Activated T-helper 1 cell treated with anti-CD3 and anti-CD28 coated beads, Interleukin-12 subunit alpha, Interleukin-12 subunit beta, Interleukin-2, Interleukin-4 antibody, amounts not matched to agents 30 ng/mL and 10 ng/mL and 1 ng/mL, durations not matched to agents 14 hours and 24 hours and 36 hours (primary cell): ENCODE measurements at regions of chr4 and their contacts with region 1.

Region 1: DNA sequence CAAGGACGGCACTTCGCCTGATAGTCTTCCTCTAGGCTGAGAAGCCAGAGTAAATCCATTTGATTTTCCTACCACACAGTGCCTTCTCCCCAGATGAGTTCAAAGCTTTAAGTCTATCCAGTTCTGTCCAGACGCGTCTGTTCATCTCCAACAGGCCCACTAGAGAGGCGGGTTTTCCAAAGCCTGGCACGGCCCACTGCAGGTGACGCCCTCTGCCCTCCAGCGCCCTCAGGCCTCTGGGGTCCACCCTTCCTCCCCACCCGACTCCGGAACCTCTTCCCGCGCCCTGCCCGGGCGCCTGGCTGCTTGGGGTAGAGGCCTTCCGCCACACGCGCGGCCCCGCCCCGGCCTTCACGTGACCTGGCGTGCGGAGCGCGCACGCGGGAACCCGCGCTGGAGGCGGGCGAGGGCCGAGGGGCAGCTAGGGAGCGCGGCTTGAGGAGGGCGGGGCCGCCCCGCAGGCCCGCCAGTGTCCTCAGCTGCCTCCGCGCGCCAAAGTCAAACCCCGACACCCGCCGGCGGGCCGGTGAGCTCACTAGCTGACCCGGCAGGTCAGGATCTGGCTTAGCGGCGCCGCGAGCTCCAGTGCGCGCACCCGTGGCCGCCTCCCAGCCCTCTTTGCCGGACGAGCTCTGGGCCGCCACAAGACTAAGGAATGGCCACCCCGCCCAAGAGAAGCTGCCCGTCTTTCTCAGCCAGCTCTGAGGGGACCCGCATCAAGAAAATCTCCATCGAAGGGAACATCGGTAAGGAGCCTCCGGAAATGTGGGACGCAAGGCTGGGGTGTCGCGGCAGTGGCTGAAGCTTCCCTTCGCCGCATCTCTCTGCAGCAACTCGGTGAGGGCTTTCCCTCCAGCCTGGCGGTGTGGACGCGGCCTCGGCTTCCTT is at the start of gene DCK:
- DNase-seq: peak; percentile 85
- H3K4me3 Mint-ChIP-seq: peak within 1 kb of the TSS; percentile 97
- H3K27ac Mint-ChIP-seq: peak within 1 kb of the TSS; percentile 83
- H3K4me1 Mint-ChIP-seq: peaks cover 53% of the 10 kb centered on the region
- H3K27me3 Mint-ChIP-seq: no peaks in the 10 kb centered on the region
- total RNA-seq, gene DCK: 35.6 and 37.3 TPM in 2 replicates

Region 2: DNA sequence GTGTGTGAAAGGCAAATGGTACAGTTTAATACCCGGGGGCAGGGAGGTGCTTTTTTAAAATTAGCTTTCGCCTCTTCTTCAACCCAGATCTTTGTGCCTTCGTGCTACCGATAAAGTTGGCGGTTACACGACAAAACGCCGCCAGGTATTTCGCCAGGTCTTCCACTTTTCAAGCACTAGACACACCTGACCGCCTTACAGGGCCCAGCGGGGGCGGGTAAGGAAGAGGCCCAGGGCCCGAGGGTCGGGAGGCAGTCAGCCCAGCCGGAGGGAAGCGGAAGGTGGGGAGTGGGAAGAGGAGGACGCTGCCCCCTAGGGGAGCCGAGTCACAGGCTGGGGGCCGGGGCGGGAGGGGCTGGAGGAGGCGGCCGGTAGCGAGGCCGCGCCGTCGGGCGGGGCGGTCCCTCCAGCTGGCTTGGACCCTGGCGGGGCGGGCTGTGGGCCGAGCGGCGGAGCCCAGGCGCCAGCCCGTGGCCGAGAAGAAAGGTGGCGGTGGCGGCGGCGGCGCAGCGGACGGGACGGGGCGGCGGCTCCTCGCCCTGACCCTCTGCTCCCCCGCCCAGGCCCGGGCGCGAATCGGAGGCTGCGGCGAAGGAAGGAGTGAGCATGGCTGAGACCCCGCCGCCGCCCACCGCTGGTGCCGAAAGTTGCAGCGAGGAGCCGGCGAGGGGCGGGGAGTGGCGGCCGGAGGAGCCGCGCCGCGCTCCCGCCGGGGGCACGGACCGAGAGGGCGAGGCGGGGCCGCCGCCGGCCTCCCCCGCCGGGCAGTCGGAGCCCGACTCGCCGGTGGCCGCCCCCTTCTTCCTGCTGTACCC is 288.9 kb before region 1 on chr4:
- intact Hi-C with region 1: loop called (anchors 2 kb)
- DNase-seq: peak; percentile 38
- H3K4me3 Mint-ChIP-seq: peak overlapping the region; percentile 76
- H3K27ac Mint-ChIP-seq: peak overlapping the region; percentile 83
- H3K4me1 Mint-ChIP-seq: peaks cover 24% of the 10 kb centered on the region
- H3K27me3 Mint-ChIP-seq: peaks cover 3% of the 10 kb centered on the region

Region 3: DNA sequence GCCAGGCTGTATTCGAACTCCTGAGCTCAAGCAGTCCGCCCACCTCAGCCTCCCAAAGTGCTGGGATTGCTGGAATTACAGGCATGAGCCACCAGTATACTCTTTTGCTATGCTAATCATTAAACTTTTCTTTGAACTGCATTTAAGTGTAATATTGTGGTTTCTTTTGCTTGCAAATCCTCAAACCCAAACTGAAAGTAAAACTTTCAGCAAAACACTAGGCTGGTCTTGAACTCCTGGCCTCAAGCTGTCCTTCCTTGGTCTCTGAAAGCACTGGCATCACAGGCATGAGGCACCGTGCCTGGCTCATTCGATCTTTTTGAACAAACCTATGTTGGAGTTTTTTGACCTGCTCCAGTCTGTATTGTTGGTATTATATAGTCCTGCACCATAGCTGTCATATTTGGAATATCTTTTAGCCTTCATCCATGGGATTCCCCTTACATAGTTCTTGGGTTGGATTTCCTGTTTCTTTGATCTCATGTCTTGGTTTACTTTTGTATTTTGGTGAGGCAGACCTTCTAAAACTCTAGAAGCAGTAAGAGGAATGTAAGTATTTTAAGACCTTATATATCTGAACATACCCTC is 57.1 kb before region 1 on chr4:
- intact Hi-C with region 1: loop called (anchors 5 kb)
- DNase-seq: peak; percentile 4
- H3K4me3 Mint-ChIP-seq: no peak overlapping the region
- H3K27ac Mint-ChIP-seq: peak overlapping the region; percentile 0
- H3K4me1 Mint-ChIP-seq: peaks cover 29% of the 10 kb centered on the region
- H3K27me3 Mint-ChIP-seq: no peaks in the 10 kb centered on the region

Region 4: DNA sequence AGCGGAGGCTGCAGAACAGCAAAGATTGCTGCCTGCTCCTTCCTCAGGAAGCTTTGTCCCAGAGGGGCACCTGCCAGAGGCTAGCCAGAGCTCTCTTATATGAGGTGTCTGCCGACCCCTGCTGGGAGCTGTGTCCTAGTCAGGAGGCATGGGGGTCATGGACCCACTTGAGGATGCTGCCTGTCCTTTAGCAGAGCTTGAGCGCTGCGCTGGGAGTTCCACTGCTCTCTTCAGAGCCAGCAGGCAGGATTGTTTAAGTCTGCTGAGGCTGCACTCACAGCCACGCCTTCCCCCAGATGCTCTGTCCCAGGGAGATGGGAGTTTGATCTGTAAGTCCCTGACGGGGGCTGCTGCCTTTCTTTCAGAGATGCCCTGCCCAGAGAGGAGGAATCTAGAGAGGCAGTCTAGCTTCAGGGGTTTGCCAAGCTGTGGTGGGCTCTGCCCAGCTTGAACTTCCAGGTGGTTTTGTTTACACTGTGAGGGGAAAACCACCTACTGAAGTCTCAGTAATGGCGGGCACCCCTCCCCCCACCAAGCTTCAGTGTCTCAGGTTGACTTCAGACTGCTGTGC is 10.9 kb after region 1 on chr4:
- intact Hi-C with region 1: loop called (anchors 1 kb)
- DNase-seq: peak; percentile 54
- H3K4me3 Mint-ChIP-seq: peak overlapping the region; percentile 76
- H3K27ac Mint-ChIP-seq: peak overlapping the region; percentile 81
- H3K4me1 Mint-ChIP-seq: peaks cover 90% of the 10 kb centered on the region
- H3K27me3 Mint-ChIP-seq: no peaks in the 10 kb centered on the region

Region 5: GRCh38 chr4:71241501-71242288 is 248.3 kb after region 1 on chr4:
- intact Hi-C with region 1: no loop called
- DNase-seq: no peak
- H3K4me3 Mint-ChIP-seq: no peak overlapping the region
- H3K27ac Mint-ChIP-seq: no peak overlapping the region
- H3K4me1 Mint-ChIP-seq: no peaks in the 10 kb centered on the region
- H3K27me3 Mint-ChIP-seq: no peaks in the 10 kb centered on the region